ENCODE measurements at regions of chr6 and their contacts with region 1.

Region 1: GRCh38 chr6:106444777-106445507 is 84.4 kb downstream of the CRYBG1 start:
- DNase-seq: no peak

Region 2: DNA sequence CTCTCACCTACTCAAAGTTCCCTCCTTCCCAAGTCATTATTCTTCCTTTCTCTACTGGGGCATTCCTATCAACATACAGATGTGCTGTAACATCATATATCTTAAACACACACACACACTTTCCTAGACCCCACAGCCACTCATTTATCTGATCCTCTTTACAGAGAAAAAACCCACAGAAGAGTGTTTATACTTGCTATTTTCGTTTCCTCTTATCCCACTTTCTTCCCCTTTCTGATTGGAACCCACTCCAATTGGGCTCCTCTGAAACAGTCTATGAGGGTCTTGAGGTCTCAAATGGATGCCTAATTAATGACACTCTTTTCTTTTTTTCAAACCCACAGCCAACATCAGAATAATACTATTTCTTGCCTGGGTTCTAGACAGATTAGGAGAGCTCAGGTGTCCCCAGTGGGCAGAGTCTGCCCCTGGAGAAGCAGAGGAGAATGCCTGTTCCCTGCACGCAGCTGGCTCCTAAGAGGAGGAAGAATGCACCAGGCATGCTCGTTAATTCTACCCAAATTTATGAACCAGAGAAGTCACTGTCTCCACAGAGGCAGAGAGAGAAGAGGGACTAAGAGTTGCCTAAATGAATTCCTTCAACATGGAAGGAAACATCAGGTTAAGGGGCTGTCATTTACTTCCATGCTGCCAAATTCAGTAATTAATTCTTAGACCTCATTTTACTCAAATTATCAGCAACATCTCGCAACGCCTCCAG is 18.5 kb before region 1 on chr6:
- intact Hi-C with region 1: no loop called
- DNase-seq: no peak

Region 3: GRCh38 chr6:106477790-106478189 is 32.8 kb after region 1 on chr6:
- intact Hi-C with region 1: no loop called
- DNase-seq: no peak

Region 4: DNA sequence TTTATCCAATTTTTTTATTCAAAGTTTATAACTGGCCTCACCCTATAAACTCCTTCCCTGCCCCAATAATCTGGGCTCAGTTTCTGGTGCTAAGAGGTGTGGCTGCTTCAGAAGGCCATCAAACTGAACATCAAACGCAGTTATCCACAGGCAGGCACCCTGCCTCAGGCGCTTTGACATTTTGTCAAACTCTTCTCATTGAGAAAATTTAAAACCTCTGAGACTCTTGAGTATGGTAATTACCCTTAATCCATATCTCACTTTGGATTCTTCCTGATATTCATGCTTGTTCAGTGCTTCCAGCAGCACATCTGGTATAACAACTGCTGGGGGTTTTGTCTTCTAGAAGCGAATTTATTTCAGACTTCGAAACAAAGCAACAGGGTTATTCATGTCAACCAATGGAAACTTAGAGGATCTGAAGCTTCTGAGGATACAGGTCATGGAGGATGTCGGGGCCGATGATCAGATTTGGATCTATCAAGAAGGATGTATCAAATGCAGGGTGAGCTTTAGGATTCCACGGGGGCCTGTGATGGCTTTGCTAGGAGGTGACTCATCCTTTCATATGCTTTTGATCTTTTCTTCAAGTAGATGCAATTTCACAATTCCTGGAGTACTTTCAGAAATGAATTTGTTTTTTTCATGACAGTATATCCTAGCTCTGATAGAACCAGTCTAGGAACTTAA is 116.2 kb after region 1 on chr6:
- intact Hi-C with region 1: loop called (anchors 2 kb)
- DNase-seq: no peak

Region 5: DNA sequence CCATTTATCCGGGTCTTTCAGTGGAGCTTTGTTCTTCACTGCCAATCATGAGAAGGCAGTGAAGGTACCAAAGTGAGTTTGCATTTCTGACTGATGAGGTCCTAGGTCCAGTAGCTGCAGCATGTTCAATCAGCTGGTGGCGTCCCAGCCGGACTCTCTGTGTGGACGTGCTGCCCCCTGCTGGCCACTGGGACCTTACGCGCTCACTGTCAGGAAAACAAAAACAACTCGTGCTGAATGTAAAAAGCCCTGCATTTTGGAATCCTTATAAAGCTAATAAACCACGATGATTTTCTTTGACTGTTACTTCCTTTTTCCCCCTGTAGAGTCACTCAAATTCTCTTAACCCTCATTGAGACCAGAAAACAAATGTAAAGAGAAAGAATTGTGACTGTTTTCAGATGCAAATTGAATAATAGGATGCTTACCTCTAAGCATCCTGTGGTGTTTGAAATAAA is 534.5 kb after region 1 on chr6:
- intact Hi-C with region 1: loop called (anchors 2 kb)
- DNase-seq: peak; percentile 93

Measured in cardiac septum (tissue), 1 donor.